RWPE1 (cell line): ENCODE measurements at regions of chr20 and their contacts with region 1.

Region 1: GRCh38 chr20:40990542-40991120 is 38.0 kb upstream of the TOP1 start:
- DNase-seq: peak; percentile 99
- H3K27ac ChIP-seq: peak overlapping the region; percentile 66
- CTCF ChIP-seq: peak; percentile 99

Region 2: DNA sequence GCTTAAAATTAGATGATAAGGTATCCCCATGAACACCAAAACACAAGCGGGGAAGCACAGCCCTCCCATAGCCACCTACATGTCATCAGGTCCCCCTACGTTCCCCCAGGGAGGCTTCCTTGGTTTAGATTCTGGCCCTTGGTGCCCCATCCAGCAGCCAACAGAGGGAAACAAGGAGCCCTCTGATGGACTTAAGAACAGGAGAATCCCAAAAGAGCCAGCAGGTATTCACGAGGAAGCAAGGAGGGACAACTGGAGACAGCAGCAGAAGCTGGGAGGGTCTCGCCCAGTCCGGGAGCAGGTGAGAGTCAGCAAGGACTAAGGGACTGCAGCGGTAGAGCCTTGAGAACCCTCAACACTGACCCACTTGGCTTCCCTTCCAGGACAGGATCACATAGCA is 20.4 kb before region 1 on chr20:
- CTCF ChIA-PET with region 1: interaction called, 10 read pairs
- POLR2A ChIA-PET with region 1: no interaction called
- DNase-seq: no peak
- H3K27ac ChIP-seq: no peak overlapping the region
- CTCF ChIP-seq: no peak

Region 3: DNA sequence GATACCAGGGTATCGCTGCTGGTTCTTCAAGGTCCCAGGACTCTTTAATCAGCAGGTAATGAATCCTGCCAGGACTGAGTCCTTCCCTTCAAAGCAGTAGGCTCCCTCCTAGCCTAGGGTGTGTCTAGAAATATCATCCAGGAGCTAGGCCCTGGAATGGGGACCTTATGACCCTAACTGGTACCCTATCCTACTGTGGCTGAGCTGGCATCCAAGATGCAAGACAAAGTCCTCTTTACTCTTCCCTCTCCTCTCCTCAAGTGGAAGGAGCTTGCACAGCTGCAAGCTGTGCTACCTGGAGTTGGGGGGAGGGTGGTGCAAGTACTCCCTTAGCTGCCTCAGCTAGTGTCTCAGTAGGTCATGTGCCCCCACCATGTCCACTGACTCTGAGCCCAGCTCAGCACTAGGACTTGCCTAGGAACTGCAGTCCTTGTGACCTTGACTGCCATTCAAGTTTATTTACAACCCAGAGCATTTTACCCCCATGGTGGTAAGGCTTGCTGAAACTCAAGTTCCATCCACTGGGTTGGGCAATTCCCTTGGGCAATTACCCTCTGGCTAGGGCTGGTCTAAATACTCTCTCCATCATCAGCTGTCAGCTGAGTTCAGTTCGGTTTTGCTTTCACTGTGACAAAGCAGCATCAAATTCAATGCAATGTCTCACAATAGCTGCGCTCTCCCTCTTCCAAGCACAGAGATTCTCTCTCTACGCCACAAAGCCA is 10.4 kb before region 1 on chr20:
- CTCF ChIA-PET with region 1: interaction called, 11 read pairs
- POLR2A ChIA-PET with region 1: no interaction called
- DNase-seq: no peak
- H3K27ac ChIP-seq: no peak overlapping the region
- CTCF ChIP-seq: no peak

Region 4: GRCh38 chr20:41047279-41047974 is 56.8 kb after region 1 on chr20:
- CTCF ChIA-PET with region 1: interaction called, 12 read pairs
- POLR2A ChIA-PET with region 1: no interaction called
- DNase-seq: peak; percentile 69
- H3K27ac ChIP-seq: no peak overlapping the region
- CTCF ChIP-seq: no peak

Region 5: DNA sequence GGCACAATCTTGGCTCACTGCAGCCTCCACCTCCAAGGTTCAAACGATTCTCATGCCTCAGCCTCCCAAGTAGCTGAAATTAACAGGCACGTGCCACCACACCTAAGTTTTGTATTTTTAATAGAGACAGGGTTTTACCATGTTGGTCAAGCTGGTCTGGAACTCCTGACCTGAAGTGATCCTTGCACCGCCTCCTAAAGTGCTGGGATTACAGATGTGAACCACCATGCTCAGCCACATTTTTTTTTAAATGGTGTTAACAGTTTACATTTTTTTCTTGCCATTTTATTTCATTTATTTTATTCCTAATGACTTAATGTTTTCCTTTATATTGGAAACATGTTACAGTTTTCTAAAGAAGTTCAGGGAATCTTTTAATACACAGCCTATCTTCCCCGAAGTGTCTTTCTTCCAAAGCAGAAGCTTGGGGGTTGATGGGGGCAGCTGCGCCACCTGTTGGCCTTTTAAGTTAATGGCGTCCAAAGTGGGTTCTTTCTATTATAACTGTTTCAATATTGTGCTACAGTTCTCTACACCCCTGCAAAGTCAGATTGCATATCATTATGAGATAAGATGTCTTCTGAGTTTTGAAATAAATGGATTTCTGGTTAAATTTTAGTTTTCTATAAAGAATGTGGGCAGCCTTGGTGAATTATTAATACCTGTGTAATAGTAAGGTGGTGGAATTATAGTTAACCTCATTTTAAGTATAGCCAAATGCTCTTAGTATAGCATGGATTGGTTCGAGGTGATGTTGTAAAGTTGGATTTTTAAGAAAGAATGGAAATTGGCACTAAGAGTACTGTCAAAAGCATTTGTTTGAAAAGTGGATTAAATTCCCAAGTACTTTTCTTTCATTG is 104.7 kb after region 1 on chr20:
- CTCF ChIA-PET with region 1: interaction called, 42 read pairs
- POLR2A ChIA-PET with region 1: no interaction called
- DNase-seq: peak; percentile 83
- H3K27ac ChIP-seq: no peak overlapping the region
- CTCF ChIP-seq: peak; percentile 99